HepG2 (cell line): ENCODE measurements at regions of chr6 and their contacts with region 1.

Region 1: DNA sequence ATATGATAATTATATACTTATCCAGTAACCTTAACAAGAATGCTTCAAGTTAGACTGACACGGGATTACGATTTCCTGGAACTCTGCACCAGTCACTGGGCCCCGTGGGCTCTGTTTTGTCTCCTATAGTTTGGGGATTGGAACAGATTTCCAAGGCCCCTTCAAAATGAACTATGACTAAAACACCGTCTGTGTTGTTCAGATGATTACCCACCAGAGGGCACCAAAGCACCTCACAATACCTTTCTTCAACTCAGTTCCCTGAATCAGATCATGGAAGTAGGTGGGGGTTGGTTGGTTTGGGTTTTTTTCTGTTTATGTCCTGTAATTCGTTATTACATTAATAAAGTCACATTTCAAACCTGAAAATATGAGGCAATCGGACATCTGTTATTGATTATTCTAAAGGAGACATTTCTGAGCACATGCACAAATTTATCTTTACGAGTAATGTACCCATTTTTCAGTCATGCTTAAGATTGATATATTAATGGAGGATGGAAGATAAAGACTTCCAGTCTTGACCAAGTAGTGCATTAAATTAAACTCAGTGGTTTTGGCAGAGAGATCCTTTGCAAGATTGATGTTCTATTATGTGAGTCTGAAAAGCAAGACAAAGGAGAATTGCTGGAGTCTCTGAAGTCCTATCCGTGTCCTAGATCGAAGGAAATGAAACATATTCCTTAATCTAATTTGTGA is 112.0 kb upstream of the COL21A1 start:
- DNase-seq: peak; percentile 74
- ATAC-seq: peak; percentile 93
- H3K4me3 ChIP-seq: no peak overlapping the region
- H3K27ac ChIP-seq: no peak overlapping the region
- H3K4me1 ChIP-seq: peaks cover 15% of the 10 kb centered on the region
- H3K27me3 ChIP-seq: peaks cover 0 to 4% of the 10 kb centered on the region in 2 experiments; a peak in 1 of 5 replicates
- CTCF ChIP-seq: peak; percentile 91
- EP300 ChIP-seq: no peak
- POLR2A ChIP-seq: no peak
- RAD21 ChIP-seq: peak; percentile 92

Region 2: DNA sequence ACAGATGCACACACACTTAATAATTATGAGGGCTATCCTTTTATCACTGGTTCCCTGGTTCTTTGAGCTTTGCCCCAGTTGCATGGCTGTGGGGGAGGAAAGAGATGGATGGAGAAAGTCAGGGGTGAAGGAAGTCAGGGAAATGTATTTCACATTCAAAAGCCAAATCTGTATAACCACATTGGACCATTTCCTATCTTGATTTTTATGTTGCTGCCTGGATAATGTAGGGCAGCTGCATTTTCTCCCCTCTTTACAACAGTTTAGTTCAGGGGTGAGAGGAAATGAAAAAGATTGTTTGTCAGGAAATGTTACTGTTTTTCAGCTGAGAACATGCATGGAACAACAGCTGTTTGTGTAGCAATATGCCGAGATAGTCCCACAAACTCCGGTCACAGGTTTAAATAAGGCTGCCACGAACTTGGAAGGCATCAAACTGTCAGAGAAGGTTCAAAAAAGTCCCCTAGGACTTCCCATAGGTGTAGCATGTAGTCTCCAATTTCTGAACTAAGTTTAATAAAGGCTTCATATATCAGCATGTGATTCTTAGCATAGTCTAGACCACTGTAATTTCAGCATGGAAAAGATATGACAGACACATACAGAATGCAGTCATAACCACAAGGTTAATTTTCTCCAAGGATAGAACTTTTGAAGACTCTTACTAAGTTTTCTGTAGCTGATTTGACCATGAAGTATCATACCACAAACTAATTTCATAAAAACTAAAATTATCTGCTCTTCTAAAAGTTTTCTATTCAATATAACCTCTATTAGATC is 29.9 kb before region 1 on chr6:
- CTCF ChIA-PET with region 1: no interaction called
- POLR2A ChIA-PET with region 1: no interaction called
- in situ Hi-C with region 1: no loop called
- intact Hi-C with region 1: no loop called
- DNase-seq: no peak
- ATAC-seq: no peak
- H3K4me3 ChIP-seq: no peak overlapping the region
- H3K27ac ChIP-seq: no peak overlapping the region
- H3K4me1 ChIP-seq: no peaks in the 10 kb centered on the region
- H3K27me3 ChIP-seq: no peaks in the 10 kb centered on the region; a peak in 1 of 5 replicates
- CTCF ChIP-seq: no peak
- EP300 ChIP-seq: no peak
- POLR2A ChIP-seq: no peak
- RAD21 ChIP-seq: no peak

Region 3: GRCh38 chr6:56451165-56451739 is 91.9 kb after region 1 on chr6:
- CTCF ChIA-PET with region 1: no interaction called
- POLR2A ChIA-PET with region 1: no interaction called
- in situ Hi-C with region 1: no loop called
- intact Hi-C with region 1: no loop called
- DNase-seq: no peak
- ATAC-seq: peak; percentile 77
- H3K4me3 ChIP-seq: no peak overlapping the region
- H3K27ac ChIP-seq: peak overlapping the region; percentile 49
- H3K4me1 ChIP-seq: peaks cover 24% of the 10 kb centered on the region
- H3K27me3 ChIP-seq: no peaks in the 10 kb centered on the region
- CTCF ChIP-seq: no peak
- EP300 ChIP-seq: no peak
- POLR2A ChIP-seq: no peak
- RAD21 ChIP-seq: no peak

Region 4: DNA sequence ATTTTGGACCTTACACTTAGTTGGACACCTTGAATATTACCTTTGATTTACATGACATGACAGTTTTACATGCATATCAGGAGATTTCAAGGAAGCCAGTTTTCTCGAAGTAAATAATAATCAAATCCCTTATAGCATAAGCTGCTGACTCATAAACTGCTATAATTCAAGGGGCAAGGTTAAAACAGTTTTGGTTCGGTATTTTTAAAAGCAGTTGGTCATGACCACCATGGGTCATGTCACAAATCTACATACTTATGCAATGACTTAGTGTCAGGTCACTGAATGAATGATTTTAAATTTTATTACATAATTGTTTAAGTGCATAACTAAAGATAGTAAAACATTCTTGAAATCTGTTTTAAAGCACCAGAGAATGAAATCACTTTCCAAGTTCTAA is 125.3 kb after region 1 on chr6:
- CTCF ChIA-PET with region 1: interaction called, 3 read pairs
- POLR2A ChIA-PET with region 1: no interaction called
- in situ Hi-C with region 1: no loop called
- intact Hi-C with region 1: loop called (anchors 1 kb)
- DNase-seq: no peak
- ATAC-seq: no peak
- H3K4me3 ChIP-seq: no peak overlapping the region
- H3K27ac ChIP-seq: no peak overlapping the region
- H3K4me1 ChIP-seq: peaks cover 16% of the 10 kb centered on the region
- H3K27me3 ChIP-seq: no peaks in the 10 kb centered on the region
- CTCF ChIP-seq: no peak
- EP300 ChIP-seq: no peak
- POLR2A ChIP-seq: no peak
- RAD21 ChIP-seq: no peak

Region 5: DNA sequence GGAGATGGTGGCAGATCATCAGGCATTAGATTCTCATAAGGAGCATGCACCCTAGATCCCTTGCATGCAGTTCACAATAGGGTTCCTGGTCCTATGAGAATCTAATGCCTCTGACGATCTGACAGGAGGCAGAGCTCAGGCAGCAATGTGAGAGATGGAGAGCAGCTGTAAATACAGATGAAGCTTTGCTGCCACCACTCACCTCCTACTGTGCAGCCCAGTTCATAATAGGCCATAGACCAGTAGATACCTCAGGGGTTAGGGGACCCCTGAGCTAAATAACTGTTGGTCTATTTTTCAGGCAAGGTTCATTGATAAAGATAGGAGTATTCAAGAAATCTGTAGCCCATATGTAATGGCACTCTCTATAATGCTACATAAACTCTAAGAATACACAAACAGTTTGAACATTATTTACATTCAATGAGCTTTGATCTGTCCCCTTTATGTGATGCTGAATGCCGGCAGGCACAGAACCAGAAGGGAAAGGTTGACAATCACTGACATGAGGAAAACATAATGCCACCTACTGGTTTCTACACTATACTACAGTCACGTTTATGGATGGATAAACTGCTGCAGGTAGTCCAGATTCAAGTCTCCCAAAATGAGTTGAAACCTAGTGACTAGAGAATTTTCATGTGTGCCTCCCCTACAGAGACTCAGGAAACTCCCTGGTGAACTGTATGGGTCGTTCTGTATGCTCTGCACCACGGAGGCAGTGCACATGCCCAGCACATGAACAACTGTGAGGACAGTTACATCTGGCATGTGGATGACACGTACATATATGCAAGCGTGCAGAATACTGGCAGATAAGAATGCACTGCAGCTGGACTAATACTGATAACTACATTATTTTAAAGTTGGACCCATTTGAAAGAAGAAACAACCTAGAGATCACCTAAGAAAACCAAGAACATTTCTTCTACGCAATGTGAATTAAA is 211.3 kb after region 1 on chr6:
- CTCF ChIA-PET with region 1: interaction called, 20 read pairs
- POLR2A ChIA-PET with region 1: no interaction called
- in situ Hi-C with region 1: loop called (anchors 10 kb)
- intact Hi-C with region 1: loop called (anchors 1 kb)
- DNase-seq: peak; percentile 60
- ATAC-seq: peak; percentile 96
- H3K4me3 ChIP-seq: no peak overlapping the region
- H3K27ac ChIP-seq: no peak overlapping the region
- H3K4me1 ChIP-seq: peaks cover 29% of the 10 kb centered on the region
- H3K27me3 ChIP-seq: no peaks in the 10 kb centered on the region
- CTCF ChIP-seq: peak; percentile 82
- EP300 ChIP-seq: no peak
- POLR2A ChIP-seq: no peak
- RAD21 ChIP-seq: peak; percentile 42; the same call in 1 of the 2 replicates

Region 6: GRCh38 chr6:56693246-56693607 is 333.9 kb after region 1 on chr6:
- CTCF ChIA-PET with region 1: no interaction called
- POLR2A ChIA-PET with region 1: no interaction called
- in situ Hi-C with region 1: no loop called
- intact Hi-C with region 1: loop called (anchors 2 kb)
- DNase-seq: peak; percentile 75
- ATAC-seq: peak; percentile 84
- H3K4me3 ChIP-seq: peak overlapping the region; percentile 56 to 64 (median 60)
- H3K27ac ChIP-seq: peak overlapping the region; percentile 68
- H3K4me1 ChIP-seq: peaks cover 55% of the 10 kb centered on the region
- H3K27me3 ChIP-seq: no peaks in the 10 kb centered on the region
- CTCF ChIP-seq: no peak
- EP300 ChIP-seq: no peak
- POLR2A ChIP-seq: peak in 1 of 2 experiments; percentile 67; a peak in 2 of 4 replicates
- RAD21 ChIP-seq: no peak

Region 7: GRCh38 chr6:56851541-56852259 is 492.4 kb after region 1 on chr6:
- CTCF ChIA-PET with region 1: no interaction called
- POLR2A ChIA-PET with region 1: no interaction called
- in situ Hi-C with region 1: no loop called
- intact Hi-C with region 1: loop called (anchors 5 kb)
- DNase-seq: peak; percentile 72
- ATAC-seq: peak; percentile 98
- H3K4me3 ChIP-seq: no peak overlapping the region
- H3K27ac ChIP-seq: no peak overlapping the region
- H3K4me1 ChIP-seq: no peaks in the 10 kb centered on the region
- H3K27me3 ChIP-seq: no peaks in the 10 kb centered on the region
- CTCF ChIP-seq: peak; percentile 82
- EP300 ChIP-seq: no peak
- POLR2A ChIP-seq: no peak
- RAD21 ChIP-seq: peak; percentile 66